Endothelial cell of umbilical vein (primary cell): ENCODE measurements at regions of chr18 and their contacts with region 1.

Region 1: GRCh38 chr18:22789600-22789999 is 143.5 kb upstream of the RBBP8 start:
- DNase-seq: no peak
- H3K4me3 ChIP-seq: no peak overlapping the region
- H3K27ac ChIP-seq: no peak overlapping the region
- H3K4me1 ChIP-seq: no peaks in the 10 kb centered on the region
- H3K27me3 ChIP-seq: peaks cover 33 to 49% of the 10 kb centered on the region in 2 experiments
- CTCF ChIP-seq: no peak
- POLR2A ChIP-seq: no peak

Region 2: DNA sequence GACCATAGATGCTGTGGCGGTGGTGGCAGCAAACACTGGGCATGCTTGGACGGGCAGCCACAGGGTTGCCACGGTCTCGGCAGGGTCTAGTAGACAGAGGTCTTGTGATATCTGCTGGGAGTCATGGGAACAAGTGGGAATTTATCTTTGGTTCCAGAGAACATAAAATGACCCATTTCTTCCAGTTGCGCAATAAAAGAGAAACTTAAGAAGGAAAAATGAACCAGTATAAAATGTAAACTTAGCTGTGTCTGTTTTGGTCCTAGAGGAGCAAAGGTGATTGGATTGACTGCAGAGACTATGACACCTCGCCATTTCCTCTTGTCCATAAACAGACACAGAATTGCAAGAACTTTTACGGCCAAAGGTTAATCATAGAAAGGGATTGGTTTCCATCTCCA is 11.0 kb after region 1 on chr18:
- CTCF ChIA-PET with region 1: interaction called, 20 read pairs
- POLR2A ChIA-PET with region 1: no interaction called
- dilution Hi-C with region 1: no loop called
- intact Hi-C with region 1: no loop called
- DNase-seq: no peak
- H3K4me3 ChIP-seq: no peak overlapping the region
- H3K27ac ChIP-seq: no peak overlapping the region
- H3K4me1 ChIP-seq: no peaks in the 10 kb centered on the region
- H3K27me3 ChIP-seq: peaks cover 33 to 48% of the 10 kb centered on the region in 2 experiments
- CTCF ChIP-seq: no peak
- POLR2A ChIP-seq: no peak